GM12878 (cell line): ENCODE measurements at regions of chr4 and their contacts with region 1.

Region 1: DNA sequence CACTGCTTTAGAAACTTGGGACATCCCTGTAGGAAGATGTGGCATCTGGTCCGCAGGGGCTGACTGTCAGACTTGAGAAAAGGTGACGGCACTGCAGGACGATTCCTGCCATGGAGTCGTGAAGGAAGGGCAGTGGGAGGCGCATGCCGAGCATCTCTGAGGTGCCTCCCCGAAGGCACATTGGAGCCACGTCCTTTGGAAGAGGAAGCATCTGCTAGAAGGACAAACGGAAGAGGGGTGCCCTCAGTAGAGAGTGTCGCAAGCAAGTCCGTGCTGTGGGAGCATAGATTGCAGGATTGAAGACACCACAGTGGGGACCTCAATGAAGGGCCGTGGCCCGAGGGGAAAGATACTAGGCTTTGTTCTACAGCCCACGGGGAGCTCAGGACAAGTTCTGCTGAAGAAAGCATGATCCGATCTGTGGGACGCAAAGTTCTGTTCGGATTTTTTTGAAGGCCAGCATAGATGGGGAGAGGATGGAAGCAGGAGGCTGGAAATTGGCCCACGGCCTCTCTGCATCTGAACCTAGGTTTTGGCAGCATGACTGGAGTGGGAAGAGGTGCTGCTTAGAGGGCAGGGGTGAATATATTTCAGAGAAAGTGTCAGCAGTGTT is 24.2 kb upstream of the HELT start:
- DNase-seq: no peak
- ATAC-seq: no peak
- H3K4me3 ChIP-seq: no peak overlapping the region
- H3K27ac ChIP-seq: no peak overlapping the region
- H3K4me1 ChIP-seq: no peaks in the 10 kb centered on the region
- H3K27me3 ChIP-seq: peaks cover 1 to 4% of the 10 kb centered on the region in 2 experiments; a peak in 3 of 4 replicates
- CTCF ChIP-seq: no peak
- EP300 ChIP-seq: no peak
- POLR2A ChIP-seq: no peak
- RAD21 ChIP-seq: no peak

Region 2: DNA sequence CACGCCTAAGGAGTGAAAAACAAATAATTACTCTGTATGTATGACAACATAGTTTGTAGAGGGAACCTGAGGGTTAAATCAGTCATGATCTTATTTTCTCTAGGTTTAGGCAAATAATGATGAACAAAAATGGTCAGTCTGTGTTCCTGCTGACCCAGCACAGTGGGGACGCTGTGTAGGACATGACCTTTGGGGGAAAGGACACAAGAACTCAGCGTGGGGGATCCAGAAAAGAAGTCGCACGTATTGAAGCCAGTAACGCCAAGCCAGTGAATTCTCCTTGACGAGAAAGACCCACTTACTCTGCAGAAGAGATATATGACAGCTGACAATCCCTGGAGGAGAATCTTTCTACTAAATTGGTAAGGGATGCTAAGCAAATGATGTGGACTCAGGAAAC is 60.8 kb after region 1 on chr4:
- CTCF ChIA-PET with region 1: no interaction called
- POLR2A ChIA-PET with region 1: no interaction called
- RAD21 ChIA-PET with region 1: no interaction called
- SMC1A ChIA-PET with region 1: no interaction called
- in situ Hi-C with region 1: loop called (anchors 10 kb)
- intact Hi-C with region 1: no loop called
- DNase-seq: no peak
- ATAC-seq: no peak
- H3K4me3 ChIP-seq: no peak overlapping the region
- H3K27ac ChIP-seq: no peak overlapping the region
- H3K4me1 ChIP-seq: no peaks in the 10 kb centered on the region
- H3K27me3 ChIP-seq: peaks cover 3 to 4% of the 10 kb centered on the region in 2 experiments; a peak in 3 of 4 replicates
- CTCF ChIP-seq: no peak
- EP300 ChIP-seq: no peak
- POLR2A ChIP-seq: no peak
- RAD21 ChIP-seq: no peak